ENCODE measurements at regions of chr1 and their contacts with region 1.

Region 1: GRCh38 chr1:175221666-175222175 is 29.1 kb upstream of the KIAA0040 start:
- DNase-seq: peak in 1 of 2 donors; percentile 34
- H3K4me3 ChIP-seq: no peak overlapping the region
- H3K27ac ChIP-seq: no peak overlapping the region
- H3K4me1 ChIP-seq: peaks cover 0 to 9% (median 0%) of the 10 kb centered on the region in 4 donors
- H3K27me3 ChIP-seq: no peaks in the 10 kb centered on the region
- CTCF ChIP-seq: peak in 1 of 2 experiments; percentile 8

Region 2: DNA sequence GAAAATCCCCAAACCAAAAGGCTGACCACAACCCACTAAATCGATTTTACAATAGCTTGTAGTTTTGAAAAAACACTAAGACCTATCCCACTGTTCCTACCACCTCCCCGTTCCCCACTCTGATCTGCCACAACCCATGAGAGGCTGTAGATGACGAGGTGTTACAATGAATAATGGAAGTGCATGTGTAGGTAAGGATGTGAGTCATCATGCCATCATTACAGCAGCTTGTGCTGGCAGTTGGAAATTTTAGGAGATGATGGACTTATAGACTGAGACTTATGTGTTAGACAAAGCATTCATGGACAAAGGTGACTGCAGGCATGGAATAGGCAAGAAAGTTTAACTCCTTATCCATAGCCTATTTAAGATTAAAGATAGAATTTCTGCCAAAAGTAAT is 406.7 kb before region 1 on chr1:
- intact Hi-C with region 1: no loop called
- DNase-seq: no peak
- H3K4me3 ChIP-seq: no peak overlapping the region
- H3K27ac ChIP-seq: no peak overlapping the region
- H3K4me1 ChIP-seq: no peaks in the 10 kb centered on the region
- H3K27me3 ChIP-seq: no peaks in the 10 kb centered on the region
- CTCF ChIP-seq: no peak

Region 3: DNA sequence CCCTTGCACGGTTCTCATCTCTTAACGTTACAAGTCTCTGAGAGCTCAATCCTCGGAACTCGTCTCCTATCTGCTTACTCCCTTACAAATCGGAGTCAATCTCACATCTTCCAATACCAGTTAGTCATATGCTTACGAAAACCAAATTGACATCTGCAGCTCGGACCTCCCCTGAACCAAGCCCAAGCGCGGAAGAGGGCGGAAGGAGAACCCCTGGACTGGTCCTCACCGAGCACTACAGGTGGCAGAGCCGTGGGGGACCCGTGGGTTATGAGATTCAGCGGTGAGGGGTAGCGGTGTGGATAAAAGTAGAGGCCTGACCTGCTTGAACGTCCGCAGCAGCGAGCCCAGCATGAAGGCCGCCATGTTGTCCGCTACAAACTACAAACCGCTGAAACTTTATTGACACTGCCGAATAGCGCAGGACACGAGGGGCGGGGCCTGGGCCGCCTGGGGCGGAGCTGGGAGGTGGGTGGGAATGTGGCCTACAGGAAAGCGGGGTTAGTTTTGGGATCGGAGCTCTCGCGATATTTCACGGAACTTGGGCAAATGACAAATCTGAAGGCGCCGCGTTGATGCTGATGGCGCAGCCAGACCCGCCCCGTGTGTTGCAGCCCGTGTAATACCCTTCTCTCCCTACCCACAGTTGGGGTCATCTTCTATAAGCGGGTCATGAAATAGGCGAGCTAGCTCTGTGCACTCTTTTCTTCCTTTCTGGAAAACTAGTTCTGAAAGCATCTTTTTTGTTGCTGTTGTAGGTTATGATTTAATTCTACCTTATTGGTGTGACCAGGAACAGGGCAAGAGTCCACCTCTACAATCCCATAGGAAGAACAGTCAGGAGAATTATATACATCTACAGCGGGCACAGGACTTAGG is 198.4 kb before region 1 on chr1 and contains the start of gene MRPS14:
- intact Hi-C with region 1: no loop called
- DNase-seq: peak; percentile 98 to 99
- H3K4me3 ChIP-seq: peak within 1 kb of the TSS; percentile 76 to 95
- H3K27ac ChIP-seq: peak within 1 kb of the TSS; percentile 80 to 86
- H3K4me1 ChIP-seq: peaks cover 0 to 20% (median 7%) of the 10 kb centered on the region in 4 donors
- H3K27me3 ChIP-seq: no peaks in the 10 kb centered on the region
- CTCF ChIP-seq: no peak

Region 4: GRCh38 chr1:175154629-175155472 is 66.9 kb before region 1 on chr1:
- intact Hi-C with region 1: loop called (anchors 10 kb)
- DNase-seq: peak; percentile 64 to 77
- H3K4me3 ChIP-seq: no peak overlapping the region
- H3K27ac ChIP-seq: no peak overlapping the region
- H3K4me1 ChIP-seq: no peaks in the 10 kb centered on the region
- H3K27me3 ChIP-seq: peaks cover 0 to 6% of the 10 kb centered on the region in 2 donors
- CTCF ChIP-seq: peak; percentile 86

Region 5: DNA sequence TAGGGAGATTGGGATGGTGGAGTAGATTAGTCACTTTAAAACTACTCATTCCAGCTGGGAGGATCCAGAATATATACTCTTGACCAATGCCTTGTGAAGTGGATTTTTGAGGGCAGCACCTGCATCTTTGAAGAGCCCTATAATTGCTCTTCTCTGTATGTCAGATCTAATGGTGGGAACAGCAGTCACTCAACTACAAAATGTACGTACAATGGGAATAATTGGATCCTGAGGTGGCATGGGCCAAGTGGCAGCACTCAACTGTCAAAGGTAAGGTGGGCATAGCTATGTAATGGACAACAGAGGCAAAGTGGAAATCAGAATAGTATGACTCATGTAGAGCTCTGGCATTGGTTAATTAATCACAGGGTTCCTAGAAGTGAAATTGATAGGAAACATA is 22.5 kb after region 1 on chr1:
- intact Hi-C with region 1: loop called (anchors 2 kb)
- DNase-seq: no peak
- H3K4me3 ChIP-seq: no peak overlapping the region
- H3K27ac ChIP-seq: no peak overlapping the region
- H3K4me1 ChIP-seq: no peaks in the 10 kb centered on the region
- H3K27me3 ChIP-seq: no peaks in the 10 kb centered on the region
- CTCF ChIP-seq: no peak